ENCODE measurements at regions of chr17 and their contacts with region 1.

Region 1: DNA sequence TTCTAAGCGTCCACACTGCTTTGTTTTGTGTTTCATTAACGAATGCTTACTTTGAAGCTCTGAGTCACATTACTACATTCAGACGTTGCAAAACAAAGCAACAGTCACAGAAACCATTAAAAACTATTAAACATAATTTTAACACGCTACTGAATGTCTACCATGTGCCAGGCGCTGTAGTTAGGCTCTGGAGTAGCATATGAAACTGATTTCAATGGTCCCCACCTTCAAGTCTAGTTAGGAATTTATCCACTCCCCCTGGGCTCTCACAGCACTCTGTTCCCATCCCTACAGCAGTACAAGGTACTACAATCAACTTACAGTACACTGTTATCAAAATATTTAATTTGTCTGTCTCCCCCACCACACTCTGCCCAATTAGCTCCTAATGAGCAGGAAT is 631 bp downstream of the UTP6 start:
- DNase-seq: no peak
- ATAC-seq: no peak
- H3K4me3 ChIP-seq: peak overlapping the region; percentile 82
- H3K27ac ChIP-seq: no peak overlapping the region
- H3K4me1 ChIP-seq: no peaks in the 10 kb centered on the region
- H3K27me3 ChIP-seq: no peaks in the 10 kb centered on the region

Region 2: GRCh38 chr17:31524926-31525800 is 375.7 kb before region 1 on chr17:
- intact Hi-C with region 1: loop called in 1 of 2 experiments (anchors 2 kb)
- DNase-seq: peak; percentile 93 to 98
- ATAC-seq: peak; percentile 81
- H3K4me3 ChIP-seq: no peak overlapping the region
- H3K27ac ChIP-seq: no peak overlapping the region
- H3K4me1 ChIP-seq: no peaks in the 10 kb centered on the region
- H3K27me3 ChIP-seq: no peaks in the 10 kb centered on the region

Region 3: GRCh38 chr17:31859474-31860008 is 41.3 kb before region 1 on chr17:
- intact Hi-C with region 1: loop called in 1 of 2 experiments (anchors 2 kb)
- DNase-seq: peak in 1 of 2 donors; percentile 30
- ATAC-seq: no peak
- H3K4me3 ChIP-seq: no peak overlapping the region
- H3K27ac ChIP-seq: no peak overlapping the region
- H3K4me1 ChIP-seq: peaks cover 2 to 9% of the 10 kb centered on the region in 2 donors
- H3K27me3 ChIP-seq: no peaks in the 10 kb centered on the region

Measured in aorta (tissue), 5 donors.